ENCODE measurements at regions of chr9 and their contacts with region 1.

Region 1: GRCh38 chr9:72871685-72872084 is 81.2 kb downstream of the ALDH1A1 start:
- DNase-seq: peak; percentile 30
- ATAC-seq: no peak
- H3K4me3 ChIP-seq: no peak overlapping the region
- H3K27ac ChIP-seq: no peak overlapping the region
- H3K4me1 ChIP-seq: no peaks in the 10 kb centered on the region
- H3K27me3 ChIP-seq: no peaks in the 10 kb centered on the region
- CTCF ChIP-seq: peak; percentile 59

Region 2: GRCh38 chr9:73023025-73023541 is 151.4 kb after region 1 on chr9:
- CTCF ChIA-PET with region 1: interaction called, 4 read pairs
- POLR2A ChIA-PET with region 1: no interaction called
- intact Hi-C with region 1: loop called (anchors 5 kb)
- DNase-seq: peak; percentile 56
- ATAC-seq: peak; percentile 40
- H3K4me3 ChIP-seq: no peak overlapping the region
- H3K27ac ChIP-seq: no peak overlapping the region
- H3K4me1 ChIP-seq: no peaks in the 10 kb centered on the region
- H3K27me3 ChIP-seq: peaks cover 13% of the 10 kb centered on the region; the same call in 1 of the 2 replicates
- CTCF ChIP-seq: peak; percentile 78

Region 3: DNA sequence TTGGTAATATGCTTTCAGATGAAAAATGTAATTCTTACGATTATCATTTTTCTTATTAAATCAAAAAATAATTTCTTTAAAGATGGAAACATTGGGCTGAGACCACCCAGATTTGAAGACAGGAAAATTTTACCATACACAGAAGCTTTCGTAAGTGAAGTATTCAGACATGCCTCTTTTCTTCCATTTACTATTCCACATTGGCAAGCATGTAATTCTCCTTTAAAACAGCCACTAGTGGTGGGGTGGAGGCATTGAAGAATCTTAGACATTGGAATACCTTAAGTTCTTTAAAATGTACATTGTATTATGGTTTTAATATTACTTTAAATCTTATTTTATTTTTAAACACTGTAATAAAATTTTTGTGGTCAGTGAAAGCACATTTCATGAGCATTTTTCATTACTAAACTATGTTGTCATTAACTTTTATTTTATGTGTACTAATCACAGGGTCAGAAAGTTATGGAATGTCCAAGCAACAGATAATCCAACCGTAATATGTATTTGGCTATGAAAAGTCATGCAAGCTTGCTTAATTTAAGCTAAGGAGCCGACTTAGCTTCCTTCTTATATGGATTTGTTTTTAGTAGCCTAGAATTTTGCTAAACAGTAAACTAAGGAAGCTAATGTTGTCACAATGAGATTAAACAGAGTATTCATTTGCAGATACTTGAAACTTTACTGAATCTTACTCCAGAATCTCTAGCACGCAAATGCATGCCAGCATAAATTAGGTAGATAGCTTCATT is 178.6 kb after region 1 on chr9:
- CTCF ChIA-PET with region 1: no interaction called
- POLR2A ChIA-PET with region 1: no interaction called
- intact Hi-C with region 1: loop called (anchors 10 kb)
- DNase-seq: no peak
- ATAC-seq: peak; percentile 31; the same call in 1 of the 2 replicates
- H3K4me3 ChIP-seq: no peak overlapping the region
- H3K27ac ChIP-seq: no peak overlapping the region
- H3K4me1 ChIP-seq: no peaks in the 10 kb centered on the region
- H3K27me3 ChIP-seq: peaks cover 38% of the 10 kb centered on the region
- CTCF ChIP-seq: no peak

Region 4: GRCh38 chr9:73081979-73082657 is 210.4 kb after region 1 on chr9:
- CTCF ChIA-PET with region 1: no interaction called
- POLR2A ChIA-PET with region 1: interaction called, 3 read pairs
- intact Hi-C with region 1: loop called (anchors 2 kb)
- DNase-seq: peak; percentile 43
- ATAC-seq: no peak
- H3K4me3 ChIP-seq: no peak overlapping the region
- H3K27ac ChIP-seq: no peak overlapping the region
- H3K4me1 ChIP-seq: peaks cover 15% of the 10 kb centered on the region
- H3K27me3 ChIP-seq: peaks cover 8% of the 10 kb centered on the region; the same call in 1 of the 2 replicates
- CTCF ChIP-seq: peak; percentile 70

Region 5: DNA sequence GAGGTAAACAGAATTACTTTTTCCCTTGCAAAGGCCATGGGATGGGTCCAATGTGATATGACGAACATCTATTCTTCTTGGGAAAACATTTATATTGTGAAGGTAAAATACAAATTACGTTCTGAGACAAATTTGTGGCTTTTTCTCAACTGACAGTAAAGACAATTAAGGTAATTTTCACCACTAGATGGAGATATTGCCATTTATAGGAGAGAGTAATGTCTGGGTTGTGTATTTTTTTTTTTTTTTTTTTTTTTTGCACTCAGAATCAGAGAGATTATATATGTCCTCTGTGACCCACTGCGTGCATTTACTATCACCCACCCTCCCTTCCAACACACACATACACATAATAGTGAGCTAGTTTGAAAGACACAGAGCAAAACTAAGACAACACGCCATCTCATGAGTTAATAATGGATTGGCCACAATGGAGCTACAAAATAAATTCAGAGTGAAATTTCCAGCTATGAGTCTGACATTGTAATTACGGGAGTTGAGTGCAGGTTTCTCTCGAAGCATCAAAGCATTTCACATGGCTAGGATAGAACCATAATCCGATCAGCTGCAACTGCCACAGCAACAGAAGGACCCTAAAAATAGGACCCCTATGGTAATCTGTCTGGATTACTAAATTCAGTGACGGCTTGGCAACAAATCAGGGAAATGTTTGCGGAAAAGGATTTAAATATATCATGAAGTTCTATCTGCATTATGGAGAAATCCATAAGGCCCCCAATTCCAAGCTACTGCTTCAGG is 329.2 kb after region 1 on chr9:
- CTCF ChIA-PET with region 1: no interaction called
- POLR2A ChIA-PET with region 1: no interaction called
- intact Hi-C with region 1: loop called (anchors 5 kb)
- DNase-seq: peak; percentile 68
- ATAC-seq: peak; percentile 54; the same call in 1 of the 2 replicates
- H3K4me3 ChIP-seq: no peak overlapping the region
- H3K27ac ChIP-seq: no peak overlapping the region
- H3K4me1 ChIP-seq: no peaks in the 10 kb centered on the region
- H3K27me3 ChIP-seq: no peaks in the 10 kb centered on the region
- CTCF ChIP-seq: peak; percentile 65